B cell (primary cell): ENCODE measurements at regions of chr4 and their contacts with region 1.

Region 1: GRCh38 chr4:38179690-38180377 is 219.6 kb downstream of the PTTG2 start:
- DNase-seq: peak; percentile 79
- ATAC-seq: peak; percentile 80
- H3K4me3 ChIP-seq: no peak overlapping the region
- H3K4me3 Mint-ChIP-seq: no peak overlapping the region
- H3K27ac ChIP-seq: no peak overlapping the region
- H3K27ac Mint-ChIP-seq: no peak overlapping the region
- H3K4me1 ChIP-seq: peaks cover 24 to 31% of the 10 kb centered on the region in 2 donors
- H3K4me1 Mint-ChIP-seq: peaks cover 29% of the 10 kb centered on the region
- H3K27me3 ChIP-seq: peaks cover 0 to 6% (median 1%) of the 10 kb centered on the region in 4 experiments
- H3K27me3 Mint-ChIP-seq: peaks cover 6% of the 10 kb centered on the region
- CTCF ChIP-seq: peak; percentile 99

Region 2: GRCh38 chr4:38062088-38062893 is 117.5 kb before region 1 on chr4:
- CTCF ChIA-PET with region 1: interaction called, 22 read pairs
- POLR2A ChIA-PET with region 1: no interaction called
- intact Hi-C with region 1: loop called (anchors 1 kb)
- DNase-seq: peak; percentile 65
- ATAC-seq: peak; percentile 62
- H3K4me3 ChIP-seq: no peak overlapping the region
- H3K4me3 Mint-ChIP-seq: peak overlapping the region; percentile 51
- H3K27ac ChIP-seq: no peak overlapping the region
- H3K27ac Mint-ChIP-seq: peak overlapping the region; percentile 42
- H3K4me1 ChIP-seq: peaks cover 0 to 5% of the 10 kb centered on the region in 2 donors
- H3K4me1 Mint-ChIP-seq: peaks cover 15% of the 10 kb centered on the region
- H3K27me3 ChIP-seq: no peaks in the 10 kb centered on the region
- H3K27me3 Mint-ChIP-seq: no peaks in the 10 kb centered on the region
- CTCF ChIP-seq: peak; percentile 93

Region 3: DNA sequence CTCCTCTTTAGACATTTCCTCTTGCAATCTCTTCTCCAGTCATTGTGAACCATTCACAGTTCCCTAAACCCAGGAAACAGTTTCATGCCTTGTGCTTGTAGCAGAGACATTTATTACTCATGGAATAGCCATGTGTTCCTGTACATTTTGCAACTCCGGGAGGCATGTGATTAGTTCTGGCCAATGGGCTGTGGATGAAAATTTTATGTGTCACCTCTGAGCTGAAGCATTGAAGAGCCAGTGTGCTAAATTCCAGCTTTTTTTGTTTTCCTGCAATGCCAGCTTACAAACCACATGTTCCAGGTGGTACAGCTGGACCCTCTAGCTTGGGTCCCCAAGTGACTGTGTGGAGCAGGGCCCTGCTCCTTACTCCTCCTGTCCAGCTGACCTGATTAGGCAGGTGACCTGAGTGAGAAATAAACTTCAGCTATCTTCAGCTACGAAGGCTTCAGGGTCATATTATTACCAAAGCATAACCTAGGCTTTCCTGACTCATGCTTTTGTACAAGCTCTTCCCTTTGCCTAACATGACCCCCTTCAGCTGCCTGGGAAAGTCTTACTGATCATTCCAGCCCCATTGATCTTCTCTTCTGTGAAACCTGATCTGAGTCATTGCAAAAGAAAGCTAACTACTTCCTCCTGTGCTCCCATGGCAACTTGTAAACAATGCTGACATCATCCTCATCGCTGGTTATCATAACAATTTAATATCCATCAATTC is 19.2 kb before region 1 on chr4:
- CTCF ChIA-PET with region 1: interaction called, 13 read pairs
- POLR2A ChIA-PET with region 1: no interaction called
- intact Hi-C with region 1: no loop called
- DNase-seq: peak; percentile 72
- ATAC-seq: peak; percentile 78
- H3K4me3 ChIP-seq: no peak overlapping the region
- H3K4me3 Mint-ChIP-seq: no peak overlapping the region
- H3K27ac ChIP-seq: peak overlapping the region in 1 of 2 donors; percentile 33
- H3K27ac Mint-ChIP-seq: peak overlapping the region; percentile 24
- H3K4me1 ChIP-seq: peaks cover under 1 to 13% of the 10 kb centered on the region in 2 donors
- H3K4me1 Mint-ChIP-seq: peaks cover 7% of the 10 kb centered on the region
- H3K27me3 ChIP-seq: no peaks in the 10 kb centered on the region
- H3K27me3 Mint-ChIP-seq: no peaks in the 10 kb centered on the region
- CTCF ChIP-seq: no peak

Region 4: DNA sequence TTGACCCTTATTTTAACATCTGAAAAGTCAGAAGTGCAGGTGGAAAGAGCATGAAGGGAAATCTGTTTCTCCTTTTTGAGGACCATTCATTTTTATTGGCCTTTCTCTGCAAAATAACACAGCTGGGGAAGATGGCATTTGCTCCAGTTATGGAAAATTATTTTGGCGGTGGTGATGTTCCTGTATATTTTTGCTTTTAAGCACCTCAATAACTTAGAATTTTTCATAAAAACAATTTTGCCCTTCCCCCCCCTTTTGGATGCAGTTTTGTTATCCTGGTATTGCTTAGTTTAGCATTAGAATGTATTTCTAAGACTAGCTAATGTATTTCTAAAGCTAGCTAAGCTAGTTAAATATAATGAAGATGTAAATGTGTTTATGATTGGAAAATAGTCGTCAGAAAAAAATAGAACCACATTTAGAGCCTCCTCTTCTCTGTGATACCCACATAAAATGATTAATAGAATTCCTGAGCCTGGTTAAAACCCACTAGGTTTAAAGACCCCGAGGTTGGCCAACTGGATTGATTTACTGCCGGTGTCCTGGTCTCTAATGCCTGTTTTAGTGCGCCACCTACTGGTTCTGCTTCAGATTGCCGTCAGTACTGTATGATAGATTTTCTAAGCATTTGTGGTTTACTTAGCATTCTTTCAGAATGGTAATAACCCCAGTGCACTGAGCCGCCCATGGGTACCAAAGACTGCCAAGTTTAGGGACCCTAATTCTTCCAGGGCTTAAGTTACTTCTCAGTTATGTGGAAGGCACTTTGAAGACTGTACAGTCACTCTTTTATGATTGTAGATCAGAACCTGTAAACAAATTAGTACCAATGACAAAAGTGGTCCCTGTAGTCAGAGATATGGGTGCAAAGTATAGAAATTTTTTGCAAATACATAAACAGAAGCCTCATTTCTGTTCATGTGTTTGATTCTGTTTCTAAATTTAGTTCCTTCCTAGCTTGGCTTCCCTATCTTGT is 495.6 kb after region 1 on chr4:
- CTCF ChIA-PET with region 1: interaction called, 297 read pairs
- POLR2A ChIA-PET with region 1: interaction called, 3 read pairs
- intact Hi-C with region 1: loop called (anchors 1 kb)
- DNase-seq: peak; percentile 87
- ATAC-seq: peak; percentile 73
- H3K4me3 ChIP-seq: no peak overlapping the region
- H3K4me3 Mint-ChIP-seq: peak overlapping the region; percentile 33
- H3K27ac ChIP-seq: peak overlapping the region in 1 of 2 donors; percentile 73
- H3K27ac Mint-ChIP-seq: peak overlapping the region; percentile 59
- H3K4me1 ChIP-seq: peaks cover 55 to 59% of the 10 kb centered on the region in 2 donors
- H3K4me1 Mint-ChIP-seq: peaks cover 78% of the 10 kb centered on the region
- H3K27me3 ChIP-seq: no peaks in the 10 kb centered on the region
- H3K27me3 Mint-ChIP-seq: no peaks in the 10 kb centered on the region
- CTCF ChIP-seq: peak; percentile 93

Region 5: DNA sequence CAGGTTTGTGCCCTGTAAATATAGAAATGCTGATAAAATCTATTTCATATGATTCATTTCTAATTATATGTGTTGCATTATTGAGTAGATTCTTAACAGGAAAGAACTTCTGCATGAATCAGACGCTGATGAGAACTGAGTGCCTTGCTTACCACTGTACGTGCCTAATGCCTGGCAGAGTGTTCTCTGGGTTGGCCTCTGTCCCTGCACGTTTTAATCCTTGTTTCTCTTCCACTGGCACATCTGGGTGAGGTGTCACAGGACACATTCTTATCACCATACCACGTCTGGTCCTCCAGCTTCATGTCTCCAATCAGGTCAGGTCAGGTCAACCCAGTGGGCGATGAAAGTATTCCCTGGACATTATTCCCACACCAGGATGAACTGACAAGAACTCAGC is 537.8 kb after region 1 on chr4:
- CTCF ChIA-PET with region 1: interaction called, 11 read pairs
- POLR2A ChIA-PET with region 1: no interaction called
- intact Hi-C with region 1: no loop called
- DNase-seq: no peak
- ATAC-seq: no peak
- H3K4me3 ChIP-seq: no peak overlapping the region
- H3K4me3 Mint-ChIP-seq: no peak overlapping the region
- H3K27ac ChIP-seq: no peak overlapping the region
- H3K27ac Mint-ChIP-seq: no peak overlapping the region
- H3K4me1 ChIP-seq: no peaks in the 10 kb centered on the region
- H3K4me1 Mint-ChIP-seq: no peaks in the 10 kb centered on the region
- H3K27me3 ChIP-seq: no peaks in the 10 kb centered on the region
- H3K27me3 Mint-ChIP-seq: peaks cover 2% of the 10 kb centered on the region
- CTCF ChIP-seq: no peak

Region 6: DNA sequence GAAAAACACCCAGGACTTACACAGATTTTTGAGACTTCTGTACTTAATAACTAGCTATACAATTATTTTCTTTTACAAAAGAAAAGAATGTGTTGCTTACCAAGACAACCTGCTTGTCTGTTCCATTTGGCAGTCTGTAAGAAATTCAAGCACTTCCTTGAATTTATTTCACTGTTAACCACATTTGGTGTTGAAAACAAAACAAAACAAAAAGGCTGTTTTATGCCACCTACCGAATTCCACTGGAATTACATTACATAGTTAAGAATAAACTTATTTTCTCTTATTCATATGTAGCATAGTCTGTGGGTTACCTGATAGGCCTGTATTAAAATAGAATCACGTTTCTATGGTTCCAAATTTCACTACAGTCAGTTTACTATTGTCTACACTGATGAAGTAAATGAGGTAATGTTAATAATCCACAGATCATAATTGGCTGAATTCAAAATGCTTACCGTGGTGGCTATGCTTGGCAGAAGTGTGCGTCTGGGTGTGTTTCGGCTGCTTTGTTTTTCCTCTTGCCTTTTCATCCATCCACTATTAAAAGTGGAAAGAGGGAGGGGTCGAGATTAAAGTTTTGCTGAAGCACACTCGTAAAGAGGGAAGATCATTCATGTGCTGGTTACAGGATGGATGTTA is 624.9 kb after region 1 on chr4 and contains the start of gene TLR1:
- CTCF ChIA-PET with region 1: interaction called, 28 read pairs
- POLR2A ChIA-PET with region 1: no interaction called
- intact Hi-C with region 1: no loop called
- DNase-seq: peak; percentile 85
- ATAC-seq: peak; percentile 52
- H3K4me3 ChIP-seq: peak within 1 kb of the TSS; percentile 57 to 97 (median 70)
- H3K4me3 Mint-ChIP-seq: peak within 1 kb of the TSS; percentile 80
- H3K27ac ChIP-seq: peak within 1 kb of the TSS; percentile 72 to 97
- H3K27ac Mint-ChIP-seq: peak within 1 kb of the TSS; percentile 95
- H3K4me1 ChIP-seq: peaks cover 32 to 45% of the 10 kb centered on the region in 2 donors
- H3K4me1 Mint-ChIP-seq: peaks cover 56% of the 10 kb centered on the region
- H3K27me3 ChIP-seq: no peaks in the 10 kb centered on the region
- H3K27me3 Mint-ChIP-seq: no peaks in the 10 kb centered on the region
- CTCF ChIP-seq: peak; percentile 75
- total RNA-seq, gene TLR1: 50.8 and 54.1 TPM in 2 replicates

Region 7: DNA sequence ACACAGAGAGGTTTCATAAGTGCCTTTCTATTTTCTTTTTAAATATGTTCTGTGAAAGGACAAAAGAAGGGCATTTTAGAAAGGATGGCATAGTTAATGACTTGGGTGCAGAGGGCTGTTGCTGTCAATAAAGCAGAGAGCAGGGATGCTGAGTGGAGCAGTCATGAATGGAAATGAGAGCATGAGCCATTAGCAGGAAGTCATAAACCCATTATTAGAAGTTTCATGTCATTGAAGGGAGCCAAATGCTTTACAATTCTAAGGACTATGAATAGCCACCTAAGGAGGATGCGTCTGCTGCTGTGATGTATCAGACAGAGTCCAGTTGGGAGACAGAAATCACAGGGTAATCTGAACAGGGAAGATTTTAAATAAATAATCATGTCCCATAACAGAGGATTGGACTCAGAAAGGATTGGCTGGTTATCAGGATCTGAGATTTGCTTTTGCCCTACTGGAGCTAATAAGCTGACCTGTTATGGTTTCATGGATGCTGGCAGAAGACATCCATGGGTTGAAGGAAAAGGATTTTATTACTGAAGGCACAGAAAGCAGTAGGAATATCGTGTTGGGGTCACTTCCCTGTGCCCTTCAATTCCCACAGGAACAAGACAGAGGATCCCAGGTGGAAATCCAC is 955.0 kb after region 1 on chr4:
- CTCF ChIA-PET with region 1: interaction called, 3 read pairs
- POLR2A ChIA-PET with region 1: no interaction called
- intact Hi-C with region 1: loop called (anchors 5 kb)
- DNase-seq: no peak
- ATAC-seq: no peak
- H3K4me3 ChIP-seq: no peak overlapping the region
- H3K4me3 Mint-ChIP-seq: no peak overlapping the region
- H3K27ac ChIP-seq: no peak overlapping the region
- H3K27ac Mint-ChIP-seq: peak overlapping the region; percentile 54
- H3K4me1 ChIP-seq: peaks cover 6 to 12% of the 10 kb centered on the region in 2 donors
- H3K4me1 Mint-ChIP-seq: peaks cover 14% of the 10 kb centered on the region
- H3K27me3 ChIP-seq: no peaks in the 10 kb centered on the region
- H3K27me3 Mint-ChIP-seq: no peaks in the 10 kb centered on the region
- CTCF ChIP-seq: no peak